ENCODE measurements at regions of chr13 and their contacts with region 1.

Region 1: DNA sequence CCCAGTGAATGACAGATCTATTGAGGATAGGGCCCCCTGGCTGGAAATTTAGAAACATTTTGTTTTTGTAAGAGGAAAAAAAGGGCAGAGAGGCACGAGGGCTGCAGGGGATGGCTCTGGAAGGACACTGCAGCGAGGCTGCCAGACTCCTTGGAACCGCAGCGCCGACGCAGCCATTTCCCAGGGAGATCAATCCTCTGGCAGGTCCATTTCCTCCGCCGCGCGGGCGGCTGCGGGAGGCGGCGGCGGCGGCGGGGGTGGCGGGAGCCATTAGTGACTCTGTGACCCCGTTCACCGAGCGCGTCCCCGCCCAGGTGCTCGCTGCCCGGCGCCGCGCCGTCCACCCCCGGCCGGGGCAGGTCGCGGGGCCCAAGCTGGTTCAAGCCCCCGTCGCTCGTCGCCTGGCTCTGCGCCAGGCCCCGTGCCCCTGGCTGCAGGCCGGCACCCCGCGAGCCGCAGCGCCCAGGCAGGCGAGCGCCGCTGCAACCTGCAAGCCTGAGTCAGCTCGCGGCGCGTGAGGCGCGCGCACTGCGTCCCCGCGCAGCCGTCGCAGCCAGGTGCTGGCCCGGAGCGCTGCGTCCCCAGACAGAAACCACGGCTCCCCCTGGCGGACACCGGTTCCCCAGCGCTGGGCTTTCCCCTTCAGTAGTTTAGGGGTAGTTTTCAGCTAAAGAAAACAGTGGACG is 192.6 kb downstream of the KATNAL1 start:
- DNase-seq: peak; percentile 86 to 94 (median 93)
- H3K4me3 ChIP-seq: peak overlapping the region; percentile 63 to 84 (median 76)
- H3K27ac ChIP-seq: no peak overlapping the region
- H3K4me1 ChIP-seq: peaks cover 1 to 25% (median 18%) of the 10 kb centered on the region in 4 experiments
- H3K27me3 ChIP-seq: no peaks in the 10 kb centered on the region

Region 2: GRCh38 chr13:29508130-29508875 is 606.4 kb before region 1 on chr13:
- CTCF ChIA-PET with region 1: interaction called, 11 read pairs
- POLR2A ChIA-PET with region 1: interaction called, 4 read pairs
- DNase-seq: peak; percentile 53 to 73 (median 59)
- H3K4me3 ChIP-seq: no peak overlapping the region
- H3K27ac ChIP-seq: no peak overlapping the region
- H3K4me1 ChIP-seq: no peaks in the 10 kb centered on the region
- H3K27me3 ChIP-seq: peaks cover 0 to 21% (median 3%) of the 10 kb centered on the region in 5 experiments

Region 3: GRCh38 chr13:29771247-29771646 is 343.5 kb before region 1 on chr13:
- CTCF ChIA-PET with region 1: interaction called, 184 read pairs
- POLR2A ChIA-PET with region 1: no interaction called
- DNase-seq: peak; percentile 55 to 79 (median 73)
- H3K4me3 ChIP-seq: no peak overlapping the region
- H3K27ac ChIP-seq: no peak overlapping the region
- H3K4me1 ChIP-seq: no peaks in the 10 kb centered on the region
- H3K27me3 ChIP-seq: no peaks in the 10 kb centered on the region

Region 4: GRCh38 chr13:29782798-29783197 is 331.9 kb before region 1 on chr13:
- CTCF ChIA-PET with region 1: interaction called, 13 read pairs
- POLR2A ChIA-PET with region 1: no interaction called
- DNase-seq: no peak
- H3K4me3 ChIP-seq: no peak overlapping the region
- H3K27ac ChIP-seq: no peak overlapping the region
- H3K4me1 ChIP-seq: no peaks in the 10 kb centered on the region
- H3K27me3 ChIP-seq: no peaks in the 10 kb centered on the region

Region 5: GRCh38 chr13:29850224-29850898 is 264.4 kb before region 1 on chr13 and contains the start of gene UBL3:
- CTCF ChIA-PET with region 1: interaction called, 11 read pairs
- POLR2A ChIA-PET with region 1: no interaction called
- DNase-seq: peak; percentile 96 to 98 (median 97)
- H3K4me3 ChIP-seq: peak within 1 kb of the TSS; percentile 87 to 100 (median 98)
- H3K27ac ChIP-seq: peak within 1 kb of the TSS; percentile 58 to 81
- H3K4me1 ChIP-seq: peaks cover 8 to 24% (median 14%) of the 10 kb centered on the region in 4 experiments
- H3K27me3 ChIP-seq: no peaks in the 10 kb centered on the region

Region 6: DNA sequence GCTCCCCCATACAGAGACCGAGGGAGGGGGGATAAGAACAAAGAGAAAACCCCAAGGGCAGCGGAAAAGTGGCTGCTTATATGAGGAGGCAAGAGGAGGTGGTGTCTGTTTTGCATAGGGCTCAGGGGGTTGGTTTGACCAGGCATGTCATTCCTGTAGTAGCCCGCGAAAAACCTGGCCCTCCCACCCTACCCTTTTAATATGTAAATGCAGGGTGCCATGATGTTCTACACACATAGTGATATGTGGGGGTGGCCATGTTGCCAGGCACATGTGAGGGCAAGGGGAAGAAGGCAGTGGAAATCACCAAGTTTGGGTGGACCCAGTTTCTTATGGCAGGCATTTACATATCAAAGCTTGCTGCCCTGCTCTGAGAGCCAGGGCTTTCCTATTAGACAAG is 60.8 kb before region 1 on chr13:
- CTCF ChIA-PET with region 1: no interaction called
- POLR2A ChIA-PET with region 1: no interaction called
- DNase-seq: no peak
- H3K4me3 ChIP-seq: no peak overlapping the region
- H3K27ac ChIP-seq: no peak overlapping the region
- H3K4me1 ChIP-seq: peaks cover 0 to 23% (median 11%) of the 10 kb centered on the region in 4 experiments
- H3K27me3 ChIP-seq: no peaks in the 10 kb centered on the region

Region 7: DNA sequence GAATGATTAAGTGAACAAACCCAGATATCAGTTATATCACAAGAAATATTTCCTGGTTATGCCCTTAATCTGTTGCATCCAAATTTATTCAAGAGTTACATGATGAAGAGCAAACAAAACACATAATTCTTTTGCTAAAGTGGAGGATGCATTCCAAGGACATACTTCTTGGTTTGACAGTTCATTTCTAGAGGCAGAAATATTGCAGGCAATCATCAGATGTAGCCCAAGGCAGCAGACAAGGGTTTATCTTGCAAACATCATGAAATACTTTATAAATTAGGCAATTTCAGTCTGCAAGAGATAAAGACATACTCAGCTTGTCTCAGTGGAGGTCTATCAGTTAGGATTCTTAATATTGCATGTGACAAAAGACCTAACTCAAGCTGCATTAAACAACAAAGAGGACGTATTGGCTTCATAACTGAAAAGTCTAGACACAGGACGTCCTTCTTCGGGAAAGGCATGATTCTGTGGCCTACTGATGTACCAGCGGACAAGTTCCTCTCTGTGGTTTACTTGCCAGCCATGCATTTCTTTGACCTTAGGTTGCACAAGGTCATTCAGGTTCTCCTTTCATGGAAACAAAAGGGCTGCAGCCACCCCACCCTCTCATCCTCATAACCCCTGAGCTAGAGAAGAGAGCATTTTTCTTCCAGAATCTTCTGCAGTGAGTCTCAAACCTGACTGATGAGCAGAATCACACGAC is 11.4 kb before region 1 on chr13:
- CTCF ChIA-PET with region 1: interaction called, 14 read pairs
- POLR2A ChIA-PET with region 1: no interaction called
- DNase-seq: peak in 1 of 3 donors; percentile 13
- H3K4me3 ChIP-seq: no peak overlapping the region
- H3K27ac ChIP-seq: no peak overlapping the region
- H3K4me1 ChIP-seq: peaks cover 0 to 4% (median 0%) of the 10 kb centered on the region in 4 experiments
- H3K27me3 ChIP-seq: no peaks in the 10 kb centered on the region

Region 8: DNA sequence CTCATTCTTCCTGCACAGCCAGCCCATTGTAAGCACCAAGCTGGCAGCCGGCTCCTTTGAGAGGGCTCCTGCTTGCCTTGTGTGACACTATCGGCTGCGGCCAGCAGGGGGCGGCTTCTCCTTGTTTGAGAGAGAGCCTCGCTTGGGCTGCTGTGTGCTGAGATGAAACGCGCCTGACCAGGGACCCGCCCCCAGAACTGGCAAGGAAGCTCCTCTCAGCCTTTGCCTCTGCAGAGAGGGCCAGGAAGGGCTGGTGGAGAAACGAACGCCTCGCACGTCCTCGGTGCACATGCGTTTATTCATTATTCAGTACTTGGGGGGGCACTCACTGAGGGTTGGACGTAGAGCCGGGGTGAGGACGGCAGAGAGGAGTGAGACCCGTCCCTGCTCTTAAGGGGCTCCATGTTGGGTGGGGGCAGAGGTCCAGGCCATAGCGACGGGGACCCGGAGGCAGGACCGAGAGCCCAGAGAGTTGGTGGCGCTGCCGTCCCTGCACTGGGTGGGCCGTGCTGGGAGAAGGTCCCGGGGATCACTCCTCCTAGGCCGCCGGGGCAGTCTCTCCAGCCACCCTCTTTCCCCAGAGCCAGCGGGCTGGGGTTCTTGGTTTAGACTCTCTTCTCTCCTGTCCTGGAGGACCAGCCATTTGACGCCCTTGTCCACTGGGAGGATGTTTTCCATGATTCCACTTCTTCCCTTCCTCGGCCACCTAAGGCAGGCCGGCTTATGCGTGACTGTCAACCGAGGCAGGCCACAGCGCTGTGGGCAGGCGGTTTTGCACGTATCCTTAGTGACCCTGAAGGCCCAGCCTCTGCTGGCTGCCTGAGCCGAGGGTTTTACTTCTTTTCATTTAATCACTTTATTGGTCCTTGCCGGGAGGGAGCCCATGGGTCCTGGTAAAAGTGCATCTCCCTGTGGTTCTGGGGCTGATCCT is 18.2 kb after region 1 on chr13:
- CTCF ChIA-PET with region 1: interaction called, 34 read pairs
- POLR2A ChIA-PET with region 1: no interaction called
- DNase-seq: peak; percentile 90 to 95 (median 94)
- H3K4me3 ChIP-seq: peak overlapping the region in 1 of 7 experiments; percentile 46
- H3K27ac ChIP-seq: no peak overlapping the region
- H3K4me1 ChIP-seq: peaks cover 0 to 4% (median 3%) of the 10 kb centered on the region in 4 experiments
- H3K27me3 ChIP-seq: no peaks in the 10 kb centered on the region

Measured in common myeloid progenitor, CD34-positive (primary cell).